Lower leg skin (tissue), 4 donors: ENCODE measurements at regions of chr2 and their contacts with region 1.

Region 1: DNA sequence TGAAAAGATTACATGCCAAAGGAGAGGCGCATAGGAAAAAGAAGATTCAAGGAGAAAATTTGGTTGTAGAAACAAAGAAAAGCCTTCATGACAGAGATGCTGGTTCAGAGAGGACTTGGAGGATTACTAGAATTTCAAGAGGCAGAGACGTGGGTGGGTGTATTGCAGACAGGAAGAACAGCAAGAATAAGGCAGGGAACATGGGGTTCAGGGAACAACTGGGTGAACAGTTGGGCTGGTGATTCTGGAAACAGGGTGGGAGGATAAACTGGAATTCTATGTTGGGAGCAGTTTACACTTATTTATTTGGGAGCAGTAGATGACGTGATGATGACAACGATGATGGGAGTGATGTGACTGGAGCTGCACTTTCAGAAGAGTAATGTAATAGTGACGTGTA is 18.4 kb upstream of the GMCL1 start:
- DNase-seq: no peak
- H3K4me3 ChIP-seq: no peak overlapping the region
- CTCF ChIP-seq: no peak
- POLR2A ChIP-seq: no peak

Region 2: DNA sequence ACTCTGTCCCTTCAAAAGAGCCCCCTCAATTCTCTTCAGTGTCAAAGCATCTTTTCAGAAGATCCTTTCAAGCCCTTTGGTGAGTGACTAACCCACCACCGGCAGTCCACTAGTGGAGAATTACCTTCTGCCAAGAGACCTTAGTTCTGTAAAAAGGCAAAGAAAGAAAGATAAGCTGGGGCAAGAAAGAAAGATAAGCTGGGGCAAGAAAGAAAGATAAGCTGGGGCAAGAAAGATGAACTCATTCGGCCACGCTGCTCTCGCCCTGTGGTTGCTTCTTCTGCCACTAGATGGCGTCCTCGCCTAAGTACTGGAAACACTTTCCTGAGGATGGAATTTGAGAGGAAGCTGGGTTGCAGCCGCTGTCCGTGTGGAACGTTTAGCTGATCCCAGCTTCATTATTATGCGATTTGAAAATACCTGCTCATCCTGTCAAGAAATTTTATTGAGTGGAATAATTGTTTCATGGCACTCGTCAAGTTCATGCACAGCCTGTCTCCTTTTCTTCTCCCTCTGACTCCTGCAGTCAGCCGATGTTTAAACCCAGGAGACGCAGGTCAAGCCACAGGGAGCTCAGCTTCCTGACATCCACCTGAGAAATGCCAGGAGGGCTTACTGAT is 86.4 kb before region 1 on chr2:
- intact Hi-C with region 1: loop called (anchors 5 kb)
- DNase-seq: peak; percentile 87 to 97
- H3K4me3 ChIP-seq: no peak overlapping the region
- CTCF ChIP-seq: peak in 1 of 3 donors; percentile 79
- POLR2A ChIP-seq: no peak